Activated T-helper 2 cell treated with anti-CD3 and anti-CD28 coated beads, Interferon-gamma antibody, Interleukin-2, Interleukin-4, amounts not matched to agents 10 μg/mL and 5 μg/mL and 100 μg/mL, durations not matched to agents 14 hours and 24 hours and 36 hours (primary cell): ENCODE measurements at regions of chr22 and their contacts with region 1.

Region 1: DNA sequence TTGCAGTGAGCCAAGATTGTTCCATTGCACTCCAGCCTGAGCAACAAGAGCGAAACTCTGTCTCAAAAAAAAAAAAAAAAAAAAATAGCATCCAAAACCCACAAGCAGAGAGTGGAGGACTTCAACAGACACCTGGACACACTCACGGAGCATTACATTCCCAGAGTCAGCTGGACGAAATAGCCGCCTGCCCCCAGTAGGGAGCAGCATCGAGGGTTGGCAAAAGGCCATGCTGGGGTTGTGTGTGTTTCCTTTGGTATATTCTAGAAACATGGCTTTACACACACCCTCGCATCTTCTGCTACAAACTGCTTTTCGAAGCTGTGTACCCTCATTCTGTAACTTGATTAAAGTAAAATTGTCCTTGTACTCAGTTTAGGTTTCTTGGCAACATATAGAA is 5.3 kb downstream of the ADA2 start:
- DNase-seq: no peak
- H3K4me3 Mint-ChIP-seq: no peak overlapping the region
- H3K27ac Mint-ChIP-seq: no peak overlapping the region
- H3K4me1 Mint-ChIP-seq: peaks cover 35% of the 10 kb centered on the region
- H3K27me3 Mint-ChIP-seq: no peaks in the 10 kb centered on the region

Region 2: DNA sequence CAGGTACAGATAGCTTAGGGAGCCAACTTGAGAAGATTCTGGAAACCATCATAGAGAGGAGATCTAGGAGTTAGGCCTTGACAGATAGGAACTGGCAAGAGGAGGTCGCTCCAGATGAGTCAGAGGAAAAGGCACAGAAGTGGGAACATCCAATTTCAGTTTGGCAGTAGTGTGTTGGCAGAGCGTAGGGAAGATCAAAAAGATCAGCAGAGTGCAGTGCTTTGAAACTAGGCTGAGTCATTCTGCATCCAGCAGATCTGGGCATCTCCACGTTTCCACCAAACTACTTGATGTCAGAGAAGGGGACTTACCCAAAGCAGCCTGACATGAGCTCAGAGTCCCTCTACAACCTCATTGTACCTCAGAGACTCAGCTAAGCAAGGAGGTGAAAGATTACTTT is 264.4 kb before region 1 on chr22:
- intact Hi-C with region 1: no loop called
- DNase-seq: no peak
- H3K4me3 Mint-ChIP-seq: no peak overlapping the region
- H3K27ac Mint-ChIP-seq: peak overlapping the region; percentile 28
- H3K4me1 Mint-ChIP-seq: peaks cover 12% of the 10 kb centered on the region
- H3K27me3 Mint-ChIP-seq: no peaks in the 10 kb centered on the region

Region 3: GRCh38 chr22:17084554-17085276 is 129.3 kb before region 1 on chr22 and contains the start of gene IL17RA:
- intact Hi-C with region 1: loop called (anchors 5 kb)
- DNase-seq: peak; percentile 94
- H3K4me3 Mint-ChIP-seq: peak within 1 kb of the TSS; percentile 88
- H3K27ac Mint-ChIP-seq: peak within 1 kb of the TSS; percentile 86
- H3K4me1 Mint-ChIP-seq: peaks cover 40% of the 10 kb centered on the region
- H3K27me3 Mint-ChIP-seq: no peaks in the 10 kb centered on the region
- total RNA-seq, gene IL17RA: 16.8 and 17.6 TPM in 2 replicates

Region 4: GRCh38 chr22:17158568-17159503 is 55.1 kb before region 1 on chr22 and contains the start of gene HDHD5:
- intact Hi-C with region 1: loop called (anchors 5 kb)
- DNase-seq: peak; percentile 75
- H3K4me3 Mint-ChIP-seq: peak within 1 kb of the TSS; percentile 83
- H3K27ac Mint-ChIP-seq: peak within 1 kb of the TSS; percentile 58
- H3K4me1 Mint-ChIP-seq: peaks cover 21% of the 10 kb centered on the region
- H3K27me3 Mint-ChIP-seq: no peaks in the 10 kb centered on the region
- total RNA-seq, gene HDHD5: 44.3 and 44.8 TPM in 2 replicates

Region 5: GRCh38 chr22:17243524-17243923 is 29.5 kb after region 1 on chr22:
- intact Hi-C with region 1: loop called (anchors 2 kb)
- DNase-seq: no peak
- H3K4me3 Mint-ChIP-seq: no peak overlapping the region
- H3K27ac Mint-ChIP-seq: peak overlapping the region; percentile 65
- H3K4me1 Mint-ChIP-seq: peaks cover 19% of the 10 kb centered on the region
- H3K27me3 Mint-ChIP-seq: no peaks in the 10 kb centered on the region

Region 6: GRCh38 chr22:17258015-17258787 is 44.2 kb after region 1 on chr22:
- intact Hi-C with region 1: loop called (anchors 1 kb)
- DNase-seq: peak; percentile 71
- H3K4me3 Mint-ChIP-seq: peak overlapping the region; percentile 3
- H3K27ac Mint-ChIP-seq: no peak overlapping the region
- H3K4me1 Mint-ChIP-seq: peaks cover 23% of the 10 kb centered on the region
- H3K27me3 Mint-ChIP-seq: peaks cover 3% of the 10 kb centered on the region

Region 7: DNA sequence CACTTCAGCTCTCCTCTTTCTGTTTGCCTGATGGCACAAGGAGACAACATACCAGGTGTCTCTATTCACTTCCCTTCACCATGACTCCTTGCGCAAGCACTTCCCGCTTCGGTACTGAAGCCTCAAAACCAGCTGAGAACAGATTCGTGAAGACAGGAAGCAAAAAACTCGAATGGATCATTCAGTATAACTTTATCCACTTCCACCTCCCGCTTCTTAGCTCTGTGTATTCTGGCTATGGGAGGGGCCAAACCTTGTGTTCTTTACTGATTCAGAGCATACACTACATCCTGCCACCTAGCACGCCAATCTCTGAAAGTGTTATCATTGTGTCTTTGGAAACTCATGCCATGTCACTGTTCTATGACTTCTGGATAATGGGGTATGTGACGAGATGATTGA is 67.5 kb after region 1 on chr22:
- intact Hi-C with region 1: loop called (anchors 2 kb)
- DNase-seq: peak; percentile 28
- H3K4me3 Mint-ChIP-seq: peak overlapping the region; percentile 67
- H3K27ac Mint-ChIP-seq: peak overlapping the region; percentile 92
- H3K4me1 Mint-ChIP-seq: peaks cover 18% of the 10 kb centered on the region
- H3K27me3 Mint-ChIP-seq: peaks cover 10% of the 10 kb centered on the region

Region 8: GRCh38 chr22:17303840-17304779 is 90.1 kb after region 1 on chr22:
- intact Hi-C with region 1: loop called (anchors 5 kb)
- DNase-seq: peak; percentile 65
- H3K4me3 Mint-ChIP-seq: no peak overlapping the region
- H3K27ac Mint-ChIP-seq: peak overlapping the region; percentile 71
- H3K4me1 Mint-ChIP-seq: peaks cover 25% of the 10 kb centered on the region
- H3K27me3 Mint-ChIP-seq: no peaks in the 10 kb centered on the region